ENCODE measurements at regions of chr4 and their contacts with region 1.

Region 1: GRCh38 chr4:121736735-121737351 is 28.1 kb downstream of the SMIM43 start:
- DNase-seq: peak; percentile 79
- H3K4me3 Mint-ChIP-seq: no peak overlapping the region
- H3K27ac Mint-ChIP-seq: no peak overlapping the region
- H3K4me1 Mint-ChIP-seq: no peaks in the 10 kb centered on the region
- H3K27me3 Mint-ChIP-seq: no peaks in the 10 kb centered on the region
- CTCF ChIP-seq: peak; percentile 43

Region 2: GRCh38 chr4:121370729-121371325 is 366.0 kb before region 1 on chr4:
- CTCF ChIA-PET with region 1: interaction called, 16 read pairs
- POLR2A ChIA-PET with region 1: no interaction called
- intact Hi-C with region 1: no loop called
- DNase-seq: peak; percentile 68
- H3K4me3 Mint-ChIP-seq: no peak overlapping the region
- H3K27ac Mint-ChIP-seq: no peak overlapping the region
- H3K4me1 Mint-ChIP-seq: peaks cover 26% of the 10 kb centered on the region
- H3K27me3 Mint-ChIP-seq: no peaks in the 10 kb centered on the region
- CTCF ChIP-seq: peak; percentile 46

Region 3: DNA sequence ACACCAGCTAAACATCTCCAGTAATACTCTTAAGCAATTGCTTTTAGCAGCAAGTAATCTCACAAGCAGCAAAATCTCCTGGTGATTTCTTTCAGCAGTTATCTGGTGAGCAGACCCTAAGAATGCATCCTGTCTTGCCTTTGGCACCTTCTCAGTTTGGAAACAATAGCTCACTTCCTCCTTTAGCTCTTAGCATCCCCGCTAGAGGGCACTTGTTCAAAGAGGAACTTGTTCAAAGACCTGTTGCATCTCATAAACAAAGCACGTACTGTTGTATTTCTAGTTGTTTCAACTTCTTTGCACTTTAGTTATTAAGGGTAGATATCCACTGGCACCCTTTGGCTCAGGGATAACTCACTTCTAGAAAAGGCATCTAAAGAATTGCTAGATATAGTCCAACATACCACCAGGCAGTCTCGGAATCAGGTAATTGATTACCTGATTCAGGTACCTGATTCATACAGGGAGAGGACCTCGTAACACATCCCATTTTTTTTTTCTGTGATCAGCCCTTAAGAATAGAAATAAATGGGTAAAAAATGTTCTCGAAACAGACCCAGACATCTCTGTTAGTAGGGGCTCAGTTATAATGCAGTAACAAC is 274.1 kb before region 1 on chr4:
- CTCF ChIA-PET with region 1: interaction called, 35 read pairs
- POLR2A ChIA-PET with region 1: no interaction called
- intact Hi-C with region 1: loop called (anchors 1 kb)
- DNase-seq: peak; percentile 85
- H3K4me3 Mint-ChIP-seq: no peak overlapping the region
- H3K27ac Mint-ChIP-seq: no peak overlapping the region
- H3K4me1 Mint-ChIP-seq: no peaks in the 10 kb centered on the region
- H3K27me3 Mint-ChIP-seq: no peaks in the 10 kb centered on the region
- CTCF ChIP-seq: peak; percentile 63

Region 4: GRCh38 chr4:121668368-121669162 is 68.3 kb before region 1 on chr4:
- CTCF ChIA-PET with region 1: interaction called, 5 read pairs
- POLR2A ChIA-PET with region 1: no interaction called
- intact Hi-C with region 1: loop called (anchors 5 kb)
- DNase-seq: peak; percentile 56
- H3K4me3 Mint-ChIP-seq: no peak overlapping the region
- H3K27ac Mint-ChIP-seq: peak overlapping the region; percentile 51
- H3K4me1 Mint-ChIP-seq: peaks cover 7% of the 10 kb centered on the region
- H3K27me3 Mint-ChIP-seq: no peaks in the 10 kb centered on the region
- CTCF ChIP-seq: no peak

Region 5: GRCh38 chr4:121726642-121727268 is 10.1 kb before region 1 on chr4:
- CTCF ChIA-PET with region 1: interaction called, 19 read pairs
- POLR2A ChIA-PET with region 1: no interaction called
- intact Hi-C with region 1: no loop called
- DNase-seq: peak; percentile 74
- H3K4me3 Mint-ChIP-seq: no peak overlapping the region
- H3K27ac Mint-ChIP-seq: peak overlapping the region; percentile 67
- H3K4me1 Mint-ChIP-seq: peaks cover 7% of the 10 kb centered on the region
- H3K27me3 Mint-ChIP-seq: no peaks in the 10 kb centered on the region
- CTCF ChIP-seq: peak; percentile 64

Region 6: DNA sequence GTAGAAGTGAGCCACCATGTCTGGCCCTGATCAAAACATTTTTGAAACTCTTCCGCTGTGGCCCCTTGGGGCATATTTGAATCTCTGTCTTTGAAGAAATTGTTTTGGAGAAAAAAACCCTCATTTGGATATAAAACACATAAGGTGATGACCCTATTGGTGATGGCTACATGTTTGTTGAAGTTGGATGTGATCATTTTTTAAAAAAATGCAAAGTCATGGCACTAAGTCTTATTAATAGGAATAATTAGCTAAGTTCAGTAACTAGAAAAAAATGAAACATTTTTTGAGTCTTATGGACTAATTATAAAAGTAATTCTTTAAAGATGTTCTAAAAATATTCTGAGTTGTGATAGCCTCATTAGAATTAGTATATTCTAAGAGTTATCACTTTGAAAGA is 151.3 kb after region 1 on chr4:
- CTCF ChIA-PET with region 1: no interaction called
- POLR2A ChIA-PET with region 1: no interaction called
- intact Hi-C with region 1: no loop called
- DNase-seq: no peak
- H3K4me3 Mint-ChIP-seq: no peak overlapping the region
- H3K27ac Mint-ChIP-seq: no peak overlapping the region
- H3K4me1 Mint-ChIP-seq: no peaks in the 10 kb centered on the region
- H3K27me3 Mint-ChIP-seq: no peaks in the 10 kb centered on the region
- CTCF ChIP-seq: no peak

Measured in MCF 10A (cell line).